A673 (cell line): ENCODE measurements at regions of chr4 and their contacts with region 1.

Region 1: DNA sequence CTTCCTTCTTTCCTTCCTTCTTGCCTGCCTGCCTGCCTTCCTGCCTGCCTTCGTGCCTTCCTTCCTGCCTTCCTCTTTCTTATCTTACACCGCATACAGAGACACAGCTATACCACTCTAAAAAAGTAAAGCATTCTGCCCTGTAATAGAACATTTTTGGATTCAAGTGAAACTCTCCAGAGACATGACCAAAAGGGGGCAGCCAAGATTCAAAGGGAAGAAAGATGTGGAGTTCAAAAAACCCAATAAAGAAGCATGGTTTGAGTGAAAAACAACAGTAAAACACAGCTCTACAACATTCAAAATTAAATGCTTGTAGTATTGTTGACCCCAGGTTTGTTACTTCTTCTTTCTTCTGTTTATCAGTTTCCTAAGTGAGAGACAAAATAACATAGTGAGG is 914.9 kb upstream of the PCDH7 start:
- DNase-seq: peak; percentile 87
- H3K4me3 ChIP-seq: no peak overlapping the region
- H3K27ac ChIP-seq: peak overlapping the region; percentile 77
- H3K4me1 ChIP-seq: peaks cover 19% of the 10 kb centered on the region
- H3K27me3 ChIP-seq: no peaks in the 10 kb centered on the region
- CTCF ChIP-seq: peak; percentile 69

Region 2: DNA sequence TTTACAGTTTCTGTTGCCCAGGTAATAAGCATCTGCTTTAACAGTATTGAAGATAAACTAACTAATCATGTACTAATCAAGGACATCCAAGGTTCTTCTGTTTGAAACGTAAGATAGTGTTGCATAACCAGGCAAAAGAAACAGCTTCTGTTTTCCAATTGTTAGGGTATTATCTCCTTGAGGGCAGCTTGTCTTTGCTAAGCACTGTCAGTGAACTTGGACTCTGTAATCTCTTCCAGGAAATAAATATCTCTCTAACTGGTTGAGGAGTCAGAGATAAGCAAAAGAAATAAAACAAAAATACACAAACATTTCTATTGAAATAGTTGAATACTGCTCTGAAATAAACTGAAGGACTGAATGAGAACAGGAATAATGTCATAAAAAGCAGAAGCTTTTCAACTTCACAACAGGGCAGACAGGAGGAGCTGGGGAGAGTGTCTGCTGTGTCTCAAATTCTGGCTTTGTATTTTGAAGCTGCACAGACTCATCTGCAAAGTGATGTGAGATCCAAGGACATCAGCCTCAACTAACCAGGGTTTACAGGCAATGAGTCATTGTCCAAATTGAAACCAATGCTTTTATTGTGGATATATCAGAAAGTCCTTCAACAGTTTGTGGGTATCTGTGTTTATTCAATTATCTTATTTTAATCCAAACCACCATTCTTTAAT is 338.1 kb before region 1 on chr4:
- CTCF ChIA-PET with region 1: no interaction called
- POLR2A ChIA-PET with region 1: no interaction called
- intact Hi-C with region 1: no loop called
- DNase-seq: no peak
- H3K4me3 ChIP-seq: no peak overlapping the region
- H3K27ac ChIP-seq: no peak overlapping the region
- H3K4me1 ChIP-seq: no peaks in the 10 kb centered on the region
- H3K27me3 ChIP-seq: no peaks in the 10 kb centered on the region
- CTCF ChIP-seq: no peak

Region 3: GRCh38 chr4:29581457-29581856 is 223.8 kb before region 1 on chr4:
- CTCF ChIA-PET with region 1: no interaction called
- POLR2A ChIA-PET with region 1: no interaction called
- intact Hi-C with region 1: no loop called
- DNase-seq: no peak
- H3K4me3 ChIP-seq: no peak overlapping the region
- H3K27ac ChIP-seq: no peak overlapping the region
- H3K4me1 ChIP-seq: no peaks in the 10 kb centered on the region
- H3K27me3 ChIP-seq: no peaks in the 10 kb centered on the region
- CTCF ChIP-seq: no peak

Region 4: GRCh38 chr4:29680644-29681043 is 124.6 kb before region 1 on chr4:
- CTCF ChIA-PET with region 1: no interaction called
- POLR2A ChIA-PET with region 1: no interaction called
- intact Hi-C with region 1: no loop called
- DNase-seq: no peak
- H3K4me3 ChIP-seq: no peak overlapping the region
- H3K27ac ChIP-seq: no peak overlapping the region
- H3K4me1 ChIP-seq: no peaks in the 10 kb centered on the region
- H3K27me3 ChIP-seq: no peaks in the 10 kb centered on the region
- CTCF ChIP-seq: no peak

Region 5: GRCh38 chr4:29927895-29928294 is 122.7 kb after region 1 on chr4:
- CTCF ChIA-PET with region 1: no interaction called
- POLR2A ChIA-PET with region 1: no interaction called
- intact Hi-C with region 1: loop called (anchors 5 kb)
- DNase-seq: peak; percentile 49
- H3K4me3 ChIP-seq: no peak overlapping the region
- H3K27ac ChIP-seq: no peak overlapping the region
- H3K4me1 ChIP-seq: peaks cover 17% of the 10 kb centered on the region
- H3K27me3 ChIP-seq: no peaks in the 10 kb centered on the region
- CTCF ChIP-seq: peak; percentile 42

Region 6: DNA sequence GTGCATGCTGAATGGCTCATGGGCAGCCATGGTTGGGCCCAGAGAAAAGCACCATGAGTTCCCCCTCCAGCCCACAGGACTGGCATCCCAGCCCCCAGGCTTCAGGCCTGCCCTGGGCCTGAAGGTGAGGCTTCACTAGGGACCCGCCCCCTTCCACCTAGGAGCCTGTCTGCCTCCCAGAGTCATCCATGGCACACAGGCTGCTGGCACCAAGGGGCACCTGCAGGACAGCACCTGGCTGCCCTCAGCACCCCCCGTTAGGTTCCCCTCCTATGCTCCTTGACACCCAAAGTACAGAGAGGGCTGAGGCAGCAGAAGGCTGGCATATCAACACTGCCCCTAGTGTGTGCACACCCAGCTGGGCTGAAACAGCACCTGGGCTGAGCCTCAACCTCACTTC is 348.2 kb after region 1 on chr4:
- CTCF ChIA-PET with region 1: no interaction called
- POLR2A ChIA-PET with region 1: no interaction called
- intact Hi-C with region 1: no loop called
- DNase-seq: no peak
- H3K4me3 ChIP-seq: no peak overlapping the region
- H3K27ac ChIP-seq: no peak overlapping the region
- H3K4me1 ChIP-seq: no peaks in the 10 kb centered on the region
- H3K27me3 ChIP-seq: no peaks in the 10 kb centered on the region
- CTCF ChIP-seq: no peak

Region 7: GRCh38 chr4:30957706-30958105 is 1152.5 kb after region 1 on chr4:
- CTCF ChIA-PET with region 1: no interaction called
- POLR2A ChIA-PET with region 1: no interaction called
- intact Hi-C with region 1: loop called (anchors 5 kb)
- DNase-seq: no peak
- H3K4me3 ChIP-seq: no peak overlapping the region
- H3K27ac ChIP-seq: peak overlapping the region; percentile 96
- H3K4me1 ChIP-seq: peaks cover 86% of the 10 kb centered on the region
- H3K27me3 ChIP-seq: no peaks in the 10 kb centered on the region
- CTCF ChIP-seq: no peak